ENCODE measurements at regions of chr14 and their contacts with region 1.

Region 1: GRCh38 chr14:24036169-24036962 is 15.4 kb upstream of the CARMIL3 start:
- DNase-seq: peak; percentile 86
- ATAC-seq: peak; percentile 89
- H3K4me3 Mint-ChIP-seq: peak overlapping the region; percentile 92
- H3K27ac Mint-ChIP-seq: peak overlapping the region; percentile 88
- H3K4me1 Mint-ChIP-seq: peaks cover 15% of the 10 kb centered on the region
- H3K27me3 Mint-ChIP-seq: no peaks in the 10 kb centered on the region

Region 2: DNA sequence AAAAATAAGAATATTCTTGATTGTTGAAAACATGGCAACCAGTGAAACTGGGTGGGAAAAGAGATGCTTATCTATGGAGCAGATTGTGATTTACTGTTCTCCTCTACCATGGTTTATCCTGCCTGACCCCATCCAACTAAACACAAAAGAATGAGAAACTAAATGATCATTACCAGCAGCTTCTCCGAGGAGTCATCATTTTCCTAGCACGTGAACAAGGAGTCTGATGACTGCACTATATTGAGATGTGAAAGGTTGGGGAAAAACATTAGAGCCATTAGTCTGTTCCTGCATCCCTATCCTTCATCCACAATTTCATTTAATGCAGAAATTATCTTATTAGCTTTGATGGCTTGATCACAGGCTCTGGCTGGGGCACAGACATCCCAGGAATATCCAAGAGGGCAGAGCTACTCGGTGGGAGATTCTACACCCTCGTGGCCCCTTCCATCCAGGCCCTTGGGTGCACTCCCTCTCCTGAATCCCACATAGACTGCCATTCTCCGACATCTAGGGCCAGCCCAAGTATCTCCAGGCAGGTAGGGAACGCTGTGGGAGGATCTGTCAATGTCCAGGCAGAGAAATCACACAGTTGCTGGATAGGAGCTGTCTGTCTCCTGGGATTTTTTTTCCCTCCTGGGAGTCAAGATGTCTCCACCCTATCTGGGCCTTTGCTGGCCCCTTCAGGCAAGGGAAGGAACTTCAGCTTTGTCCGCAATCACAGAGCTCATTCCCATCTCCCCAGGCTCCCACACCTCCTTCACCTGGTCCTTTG is 126.1 kb before region 1 on chr14:
- CTCF ChIA-PET with region 1: no interaction called
- POLR2A ChIA-PET with region 1: no interaction called
- intact Hi-C with region 1: no loop called
- DNase-seq: peak; percentile 46
- ATAC-seq: no peak
- H3K4me3 Mint-ChIP-seq: no peak overlapping the region
- H3K27ac Mint-ChIP-seq: no peak overlapping the region
- H3K4me1 Mint-ChIP-seq: no peaks in the 10 kb centered on the region
- H3K27me3 Mint-ChIP-seq: peaks cover 18% of the 10 kb centered on the region

Region 3: GRCh38 chr14:23984891-23985602 is 51.3 kb before region 1 on chr14:
- CTCF ChIA-PET with region 1: interaction called, 4 read pairs
- POLR2A ChIA-PET with region 1: no interaction called
- intact Hi-C with region 1: loop called (anchors 1 to 5 kb)
- DNase-seq: no peak
- ATAC-seq: no peak
- H3K4me3 Mint-ChIP-seq: no peak overlapping the region
- H3K27ac Mint-ChIP-seq: no peak overlapping the region
- H3K4me1 Mint-ChIP-seq: peaks cover 18% of the 10 kb centered on the region
- H3K27me3 Mint-ChIP-seq: no peaks in the 10 kb centered on the region

Region 4: DNA sequence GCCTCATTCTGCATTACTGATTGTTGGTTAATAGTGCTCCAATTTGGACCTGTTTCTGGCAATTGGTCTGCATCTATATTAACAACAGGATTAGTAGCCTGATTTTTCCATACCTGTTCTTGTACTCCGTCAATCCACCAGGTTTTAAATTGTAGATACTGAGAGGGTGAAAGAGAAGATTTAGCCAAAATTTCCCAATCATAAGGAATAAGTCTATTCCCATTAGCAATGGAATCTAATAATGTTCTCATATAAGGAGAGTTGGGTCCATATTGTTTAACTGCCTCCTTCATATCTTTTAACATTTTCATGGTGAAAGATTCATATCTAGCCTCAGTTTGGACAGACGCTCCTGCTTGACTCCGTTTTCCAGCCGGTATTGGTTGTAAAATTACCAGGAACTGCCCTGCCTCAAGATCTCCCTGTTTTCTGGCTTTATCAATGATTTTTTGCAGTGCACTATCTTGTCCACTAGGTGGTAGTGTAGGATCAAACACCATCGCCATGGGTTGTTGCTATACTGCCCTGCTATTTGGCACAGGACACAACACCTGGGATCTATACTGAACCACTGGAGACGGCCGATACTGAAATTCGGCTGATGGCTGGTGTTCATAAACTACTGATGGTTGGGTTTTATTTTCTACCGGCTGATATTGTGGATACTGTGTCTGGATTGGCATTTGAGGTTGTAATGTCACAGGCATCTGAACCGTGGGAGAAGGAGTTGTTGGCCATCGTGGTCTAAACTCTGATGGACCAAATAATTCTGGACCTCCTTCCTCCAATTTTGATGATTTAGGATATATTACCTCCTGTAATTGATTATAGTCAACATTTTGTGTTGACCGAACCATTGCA is 22.5 kb before region 1 on chr14:
- CTCF ChIA-PET with region 1: interaction called, 5 read pairs
- POLR2A ChIA-PET with region 1: interaction called, 3 read pairs
- intact Hi-C with region 1: loop called (anchors 1 kb)
- DNase-seq: peak; percentile 63
- ATAC-seq: peak; percentile 98
- H3K4me3 Mint-ChIP-seq: no peak overlapping the region
- H3K27ac Mint-ChIP-seq: no peak overlapping the region
- H3K4me1 Mint-ChIP-seq: peaks cover 23% of the 10 kb centered on the region
- H3K27me3 Mint-ChIP-seq: no peaks in the 10 kb centered on the region